CD8-positive, alpha-beta memory T cell (primary cell): ENCODE measurements at regions of chr5 and their contacts with region 1.

Region 1: GRCh38 chr5:144191998-144192397 is 21.3 kb downstream of the KCTD16 start:
- DNase-seq: peak in 4 of 5 donors; percentile 17 to 81 (median 66)
- H3K4me3 ChIP-seq: peak overlapping the region; percentile 36
- H3K4me3 Mint-ChIP-seq: no peak overlapping the region
- H3K27ac ChIP-seq: no peak overlapping the region
- H3K27ac Mint-ChIP-seq: no peak overlapping the region
- H3K4me1 ChIP-seq: peaks cover 55% of the 10 kb centered on the region
- H3K4me1 Mint-ChIP-seq: peaks cover 0 to 23% (median 22%) of the 10 kb centered on the region in 3 donors
- H3K27me3 ChIP-seq: no peaks in the 10 kb centered on the region
- H3K27me3 Mint-ChIP-seq: no peaks in the 10 kb centered on the region

Region 2: GRCh38 chr5:143850050-143850683 is 341.8 kb before region 1 on chr5:
- CTCF ChIA-PET with region 1: no interaction called
- POLR2A ChIA-PET with region 1: no interaction called
- DNase-seq: no peak
- H3K4me3 ChIP-seq: no peak overlapping the region
- H3K4me3 Mint-ChIP-seq: peak overlapping the region in 5 of 7 donors; percentile 2 to 63 (median 20)
- H3K27ac ChIP-seq: no peak overlapping the region
- H3K27ac Mint-ChIP-seq: no peak overlapping the region
- H3K4me1 ChIP-seq: no peaks in the 10 kb centered on the region
- H3K4me1 Mint-ChIP-seq: peaks cover 3 to 7% (median 6%) of the 10 kb centered on the region in 3 donors
- H3K27me3 ChIP-seq: no peaks in the 10 kb centered on the region
- H3K27me3 Mint-ChIP-seq: peaks cover 2 to 15% of the 10 kb centered on the region in 2 donors

Region 3: GRCh38 chr5:144170276-144171024 is 21.5 kb before region 1 on chr5 and contains the starts of genes KCTD16 and YIPF5:
- CTCF ChIA-PET with region 1: interaction called, 19 read pairs
- POLR2A ChIA-PET with region 1: interaction called, 22 read pairs
- DNase-seq: peak; percentile 94 to 99 (median 97)
- H3K4me3 ChIP-seq: peak within 1 kb of the TSS; percentile 94
- H3K4me3 Mint-ChIP-seq: peak within 1 kb of the TSS; percentile 87 to 99 (median 90)
- H3K27ac ChIP-seq: peak within 1 kb of the TSS; percentile 97
- H3K27ac Mint-ChIP-seq: peak within 1 kb of the TSS; percentile 84 to 98 (median 94)
- H3K4me1 ChIP-seq: peaks cover 17% of the 10 kb centered on the region
- H3K4me1 Mint-ChIP-seq: peaks cover 43 to 56% (median 54%) of the 10 kb centered on the region in 3 donors
- H3K27me3 ChIP-seq: no peaks in the 10 kb centered on the region
- H3K27me3 Mint-ChIP-seq: peaks cover 1 to 4% of the 10 kb centered on the region in 2 donors
- total RNA-seq, gene KCTD16: 0.02 to 0.09 TPM
- total RNA-seq, gene YIPF5: 40.8 to 42.0 TPM

Region 4: GRCh38 chr5:144203750-144204596 is 12.0 kb after region 1 on chr5:
- CTCF ChIA-PET with region 1: interaction called, 17 read pairs
- POLR2A ChIA-PET with region 1: no interaction called
- DNase-seq: peak in 3 of 5 donors; percentile 26 to 50 (median 31)
- H3K4me3 ChIP-seq: no peak overlapping the region
- H3K4me3 Mint-ChIP-seq: no peak overlapping the region
- H3K27ac ChIP-seq: no peak overlapping the region
- H3K27ac Mint-ChIP-seq: no peak overlapping the region
- H3K4me1 ChIP-seq: no peaks in the 10 kb centered on the region
- H3K4me1 Mint-ChIP-seq: peaks cover 2 to 5% (median 5%) of the 10 kb centered on the region in 3 donors
- H3K27me3 ChIP-seq: peaks cover 12% of the 10 kb centered on the region
- H3K27me3 Mint-ChIP-seq: peaks cover 39 to 88% of the 10 kb centered on the region in 2 donors

Region 5: DNA sequence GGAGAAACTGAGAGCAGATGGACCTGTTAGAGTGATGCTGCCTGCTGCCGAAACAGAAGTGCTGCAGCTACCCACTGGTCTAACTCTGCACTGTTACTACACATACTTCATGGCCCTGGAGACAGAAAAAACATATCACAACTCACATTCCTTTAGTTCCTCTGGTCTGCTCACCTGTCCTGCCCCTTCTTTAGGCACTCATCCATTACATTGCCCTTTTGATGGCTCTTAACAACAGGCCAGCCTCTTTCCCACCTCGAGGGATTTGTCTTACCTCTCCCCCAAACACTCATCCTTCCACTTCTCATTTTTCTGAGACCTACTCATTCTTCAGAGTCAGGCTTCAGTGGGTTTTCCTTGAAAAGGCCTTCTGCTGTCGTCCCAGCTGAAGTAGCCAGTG is 27.9 kb after region 1 on chr5:
- CTCF ChIA-PET with region 1: no interaction called
- POLR2A ChIA-PET with region 1: no interaction called
- DNase-seq: no peak
- H3K4me3 ChIP-seq: no peak overlapping the region
- H3K4me3 Mint-ChIP-seq: no peak overlapping the region
- H3K27ac ChIP-seq: no peak overlapping the region
- H3K27ac Mint-ChIP-seq: no peak overlapping the region
- H3K4me1 ChIP-seq: no peaks in the 10 kb centered on the region
- H3K4me1 Mint-ChIP-seq: no peaks in the 10 kb centered on the region
- H3K27me3 ChIP-seq: no peaks in the 10 kb centered on the region
- H3K27me3 Mint-ChIP-seq: peaks cover 8 to 52% of the 10 kb centered on the region in 2 donors